Astrocyte of the cerebellum (primary cell): ENCODE measurements at regions of chr15 and their contacts with region 1.

Region 1: GRCh38 chr15:50251647-50252182 is 13.8 kb downstream of the HDC start:
- DNase-seq: no peak
- H3K4me3 ChIP-seq: no peak overlapping the region
- CTCF ChIP-seq: no peak

Region 2: DNA sequence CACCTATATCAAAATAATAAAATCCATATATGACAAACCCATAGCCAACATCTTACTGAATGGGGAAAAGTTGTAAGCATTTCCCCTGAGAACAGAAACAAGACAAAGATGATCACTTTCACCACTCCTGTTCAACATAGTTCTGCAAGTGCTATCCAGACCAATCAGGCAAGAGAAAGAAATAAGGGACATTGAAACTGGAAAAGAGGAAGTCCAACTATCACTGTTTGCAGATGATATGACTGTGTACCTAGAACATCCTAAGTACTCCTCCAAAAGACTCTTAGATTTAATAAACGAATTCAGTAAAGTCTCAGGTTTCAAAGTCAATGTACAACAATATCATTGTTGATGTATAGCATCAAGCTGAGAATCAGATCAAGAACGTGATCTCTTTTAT is 864.2 kb before region 1 on chr15:
- in situ Hi-C with region 1: no loop called
- DNase-seq: no peak
- H3K4me3 ChIP-seq: no peak overlapping the region
- CTCF ChIP-seq: no peak

Region 3: DNA sequence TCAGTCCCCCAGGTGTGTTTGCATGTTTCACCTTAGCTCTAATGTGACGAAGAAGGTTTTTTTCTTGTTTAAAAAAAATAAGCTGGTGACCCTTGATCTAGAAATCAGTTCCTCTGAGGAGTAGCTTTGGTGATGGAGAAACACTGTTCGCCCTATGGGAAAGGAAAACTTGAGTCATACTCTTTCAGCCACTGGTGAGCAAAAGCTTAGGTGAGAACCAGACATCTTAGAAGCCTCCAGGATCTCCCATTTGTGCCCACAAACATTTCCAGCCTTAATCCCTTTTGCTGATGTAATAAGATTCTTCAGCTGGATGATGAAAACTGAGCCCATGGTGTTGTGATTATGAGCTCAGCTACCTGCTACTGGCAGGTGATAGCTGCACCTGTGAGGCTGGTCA is 31.9 kb before region 1 on chr15:
- in situ Hi-C with region 1: loop called (anchors 5 kb)
- DNase-seq: no peak
- H3K4me3 ChIP-seq: no peak overlapping the region
- CTCF ChIP-seq: no peak

Region 4: GRCh38 chr15:50365971-50366370 is 114.3 kb after region 1 on chr15:
- in situ Hi-C with region 1: no loop called
- DNase-seq: no peak
- H3K4me3 ChIP-seq: no peak overlapping the region
- CTCF ChIP-seq: no peak